Esophagus squamous epithelium (tissue), 5 donors: ENCODE measurements at regions of chr1 and their contacts with region 1.

Region 1: DNA sequence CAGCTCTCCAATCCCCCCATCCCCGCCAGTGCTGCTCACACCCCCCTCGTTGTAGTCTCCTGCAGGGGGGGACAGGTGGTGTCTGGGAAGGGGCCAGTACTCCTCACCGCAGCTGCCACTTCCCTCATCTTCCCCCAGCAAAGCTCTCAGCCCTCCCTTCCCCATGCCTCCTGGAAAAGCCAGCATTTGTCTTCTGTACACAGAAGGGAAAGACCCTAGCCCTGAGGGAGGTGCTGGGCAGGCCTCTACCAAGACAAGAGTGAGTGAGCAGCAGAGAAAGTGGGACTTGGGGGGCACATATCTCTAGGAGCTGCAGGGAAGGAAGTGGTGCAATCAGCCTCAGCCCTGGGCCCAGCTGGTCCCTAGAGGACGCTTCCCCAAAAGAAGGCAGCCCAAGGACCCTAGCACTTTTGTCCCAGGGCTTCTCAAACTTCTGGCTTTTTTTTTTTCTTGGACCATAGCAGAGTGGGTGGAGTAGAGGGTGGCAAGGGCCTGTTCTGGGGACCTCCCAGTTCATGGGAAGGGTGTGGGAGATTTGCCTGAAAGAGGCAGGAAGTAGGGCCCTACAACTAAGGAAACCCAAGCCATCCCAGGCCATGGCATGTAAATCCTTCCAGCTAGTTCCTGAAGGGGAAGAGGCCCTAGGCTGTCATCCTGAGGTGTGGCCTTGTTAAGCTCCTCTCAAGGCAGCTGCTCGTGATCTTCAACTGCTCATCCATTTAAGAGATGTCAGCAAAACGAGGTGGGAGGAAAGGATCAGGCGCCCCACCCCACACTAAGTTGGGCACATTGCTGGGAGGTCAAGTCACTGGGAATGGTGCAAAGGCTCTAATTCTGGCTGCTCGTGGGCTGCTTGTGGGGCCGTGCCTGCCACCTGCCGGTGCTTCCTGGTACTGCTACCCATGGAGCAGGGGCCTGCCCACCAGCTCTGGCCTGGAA is 12.6 kb downstream of the ZC3H12A start:
- DNase-seq: no peak
- H3K4me3 ChIP-seq: no peak overlapping the region
- H3K27ac ChIP-seq: peak overlapping the region; percentile 78 to 89 (median 81)
- H3K4me1 ChIP-seq: peaks cover 34 to 56% (median 39%) of the 10 kb centered on the region in 3 donors
- H3K27me3 ChIP-seq: no peaks in the 10 kb centered on the region
- CTCF ChIP-seq: peak; percentile 99 to 100 (median 99)
- POLR2A ChIP-seq: no peak

Region 2: DNA sequence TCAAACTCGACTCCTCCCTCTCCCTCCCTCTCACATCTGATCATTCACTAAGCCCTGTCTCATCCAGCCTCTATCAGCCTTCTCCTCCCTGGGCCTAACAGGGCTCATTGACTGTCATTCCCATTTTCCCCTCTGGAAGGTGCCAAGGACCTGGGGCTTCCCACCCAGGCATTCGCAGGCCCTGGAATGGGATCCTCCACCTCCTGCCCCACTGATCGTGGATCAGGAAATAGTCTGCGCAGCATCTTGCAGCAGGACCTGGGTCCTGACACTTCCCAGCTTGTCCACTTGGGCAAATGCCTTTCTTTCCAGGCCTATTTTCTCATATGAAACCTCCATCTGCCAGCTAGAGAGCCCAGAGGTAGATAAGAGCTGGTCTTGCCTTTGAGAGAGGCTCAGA is 83.8 kb before region 1 on chr1:
- intact Hi-C with region 1: no loop called
- DNase-seq: no peak
- H3K4me3 ChIP-seq: no peak overlapping the region
- H3K27ac ChIP-seq: no peak overlapping the region
- H3K4me1 ChIP-seq: no peaks in the 10 kb centered on the region
- H3K27me3 ChIP-seq: peaks cover 0 to 38% (median 0%) of the 10 kb centered on the region in 4 donors
- CTCF ChIP-seq: no peak
- POLR2A ChIP-seq: no peak

Region 3: DNA sequence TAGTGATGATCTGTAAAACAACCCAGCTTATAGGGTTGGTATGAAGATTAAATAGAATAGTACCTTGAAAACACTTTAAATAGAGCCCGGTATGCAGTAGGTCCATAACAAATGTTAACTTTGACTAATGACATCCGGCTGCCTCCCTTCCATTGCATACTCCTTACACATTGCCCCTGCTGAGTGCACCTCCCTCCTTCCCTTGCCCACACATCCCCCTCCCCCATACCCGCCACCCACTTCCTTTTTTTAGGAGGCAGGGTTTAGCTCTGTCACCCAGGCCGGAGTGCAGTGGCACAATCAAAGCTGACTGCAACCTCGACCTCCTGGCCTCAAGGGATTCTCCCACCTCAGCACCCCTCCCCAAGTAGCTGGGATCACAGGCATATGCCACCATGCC is 37.0 kb before region 1 on chr1:
- intact Hi-C with region 1: loop called (anchors 5 kb)
- DNase-seq: no peak
- H3K4me3 ChIP-seq: no peak overlapping the region
- H3K27ac ChIP-seq: no peak overlapping the region
- H3K4me1 ChIP-seq: peaks cover 0 to 5% (median 2%) of the 10 kb centered on the region in 3 donors
- H3K27me3 ChIP-seq: peaks cover 0 to 59% (median 2%) of the 10 kb centered on the region in 4 donors
- CTCF ChIP-seq: no peak
- POLR2A ChIP-seq: no peak